ENCODE measurements at regions of chr11 and their contacts with region 1.

Region 1: GRCh38 chr11:67252831-67253239 is 13.4 kb upstream of the GRK2 start:
- DNase-seq: peak; percentile 65
- ATAC-seq: peak; percentile 80
- H3K4me3 Mint-ChIP-seq: no peak overlapping the region
- H3K27ac Mint-ChIP-seq: peak overlapping the region; percentile 48
- H3K4me1 Mint-ChIP-seq: peaks cover 46% of the 10 kb centered on the region
- H3K27me3 Mint-ChIP-seq: no peaks in the 10 kb centered on the region

Region 2: GRCh38 chr11:67213178-67213621 is 39.6 kb before region 1 on chr11:
- CTCF ChIA-PET with region 1: no interaction called
- POLR2A ChIA-PET with region 1: no interaction called
- DNase-seq: no peak
- ATAC-seq: no peak
- H3K4me3 Mint-ChIP-seq: no peak overlapping the region
- H3K27ac Mint-ChIP-seq: no peak overlapping the region
- H3K4me1 Mint-ChIP-seq: peaks cover 6% of the 10 kb centered on the region
- H3K27me3 Mint-ChIP-seq: no peaks in the 10 kb centered on the region

Region 3: DNA sequence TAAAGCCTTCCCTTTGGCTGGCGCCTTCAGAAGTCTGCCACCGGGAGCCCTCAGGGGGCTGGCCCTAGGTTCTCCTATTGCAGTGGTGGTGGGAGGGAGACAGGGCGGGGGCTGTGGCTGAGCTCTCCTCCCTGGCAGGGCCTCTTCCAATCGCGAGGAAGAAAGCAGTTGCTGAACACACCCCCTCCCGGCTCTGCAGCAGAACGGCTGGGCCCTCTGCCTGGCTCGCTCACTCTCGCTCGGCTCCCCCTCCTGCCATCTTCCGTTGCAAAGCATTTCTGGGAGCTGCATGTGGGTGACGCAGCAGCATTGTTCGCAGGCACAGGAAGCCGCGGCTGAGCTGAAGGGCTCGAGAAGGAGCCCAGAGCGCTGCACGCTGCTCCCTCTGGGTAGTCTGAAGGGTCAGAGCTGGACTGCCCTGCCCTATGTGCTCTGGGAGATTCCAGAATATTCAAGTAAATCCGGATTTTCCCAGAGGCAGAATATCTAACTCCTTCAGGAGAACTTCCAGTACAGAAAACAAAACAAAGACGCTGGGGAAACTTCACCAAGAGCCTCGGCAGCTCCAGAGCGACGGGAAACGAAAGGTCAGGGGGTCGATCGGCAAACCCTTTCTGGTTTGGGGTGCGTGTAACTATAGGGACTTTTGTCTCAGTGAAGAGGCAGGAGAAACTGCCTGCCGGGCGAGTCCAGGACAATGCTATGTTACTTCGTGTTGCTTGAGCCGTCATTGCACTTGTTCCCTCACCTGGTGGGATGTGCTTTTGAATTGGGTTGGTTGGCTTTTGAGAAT is 12.9 kb before region 1 on chr11:
- CTCF ChIA-PET with region 1: interaction called, 28 read pairs
- POLR2A ChIA-PET with region 1: interaction called, 39 read pairs
- DNase-seq: peak; percentile 98
- ATAC-seq: peak; percentile 94
- H3K4me3 Mint-ChIP-seq: peak overlapping the region; percentile 100
- H3K27ac Mint-ChIP-seq: peak overlapping the region; percentile 98
- H3K4me1 Mint-ChIP-seq: peaks cover 45% of the 10 kb centered on the region
- H3K27me3 Mint-ChIP-seq: no peaks in the 10 kb centered on the region

Region 4: DNA sequence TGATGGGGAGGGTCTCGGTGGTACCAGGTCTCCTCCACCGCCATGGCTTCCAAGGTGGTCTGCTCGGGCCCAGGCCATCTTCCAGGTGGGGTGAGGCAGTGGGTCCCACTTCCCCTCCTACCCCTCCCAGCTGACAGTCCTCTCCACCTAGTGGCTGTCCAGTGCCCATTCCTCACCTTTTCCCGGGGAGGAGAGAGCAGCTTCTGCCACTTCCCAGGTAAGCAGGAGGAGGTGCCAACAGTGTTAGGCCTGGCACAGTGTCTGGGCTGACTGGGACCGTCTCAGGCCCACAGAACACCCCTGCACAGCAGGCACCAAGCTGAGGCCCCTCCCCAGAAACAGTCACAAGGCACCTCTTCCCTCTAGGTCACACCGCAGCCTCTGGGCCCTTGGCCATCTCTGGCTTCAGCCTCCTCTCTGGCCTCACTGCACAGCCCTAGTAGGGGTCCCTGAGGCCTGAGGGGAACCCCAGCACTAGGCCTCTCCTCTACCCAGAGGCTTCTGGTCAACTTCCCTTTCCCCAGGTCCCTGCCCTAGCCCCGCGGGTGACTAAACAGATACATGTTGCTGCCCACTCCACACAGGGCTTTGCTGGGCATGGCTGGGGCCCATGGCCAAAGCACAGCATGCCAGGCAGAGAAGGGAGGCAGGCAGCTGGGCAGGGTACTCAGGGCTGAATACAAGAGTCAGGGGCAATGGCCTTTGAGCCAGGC is 33.9 kb after region 1 on chr11:
- CTCF ChIA-PET with region 1: no interaction called
- POLR2A ChIA-PET with region 1: no interaction called
- DNase-seq: no peak
- ATAC-seq: no peak
- H3K4me3 Mint-ChIP-seq: peak overlapping the region; percentile 75
- H3K27ac Mint-ChIP-seq: peak overlapping the region; percentile 97
- H3K4me1 Mint-ChIP-seq: peaks cover 74% of the 10 kb centered on the region
- H3K27me3 Mint-ChIP-seq: no peaks in the 10 kb centered on the region

Measured in activated CD8-positive, alpha-beta T cell treated with anti-CD3 and anti-CD28 coated beads, Interleukin-2, amount 10 ng/mL, durations not matched to agents 7 days and 5 days (primary cell).